Naive thymus-derived CD4-positive, alpha-beta T cell (primary cell): ENCODE measurements at regions of chr1 and their contacts with region 1.

Region 1: DNA sequence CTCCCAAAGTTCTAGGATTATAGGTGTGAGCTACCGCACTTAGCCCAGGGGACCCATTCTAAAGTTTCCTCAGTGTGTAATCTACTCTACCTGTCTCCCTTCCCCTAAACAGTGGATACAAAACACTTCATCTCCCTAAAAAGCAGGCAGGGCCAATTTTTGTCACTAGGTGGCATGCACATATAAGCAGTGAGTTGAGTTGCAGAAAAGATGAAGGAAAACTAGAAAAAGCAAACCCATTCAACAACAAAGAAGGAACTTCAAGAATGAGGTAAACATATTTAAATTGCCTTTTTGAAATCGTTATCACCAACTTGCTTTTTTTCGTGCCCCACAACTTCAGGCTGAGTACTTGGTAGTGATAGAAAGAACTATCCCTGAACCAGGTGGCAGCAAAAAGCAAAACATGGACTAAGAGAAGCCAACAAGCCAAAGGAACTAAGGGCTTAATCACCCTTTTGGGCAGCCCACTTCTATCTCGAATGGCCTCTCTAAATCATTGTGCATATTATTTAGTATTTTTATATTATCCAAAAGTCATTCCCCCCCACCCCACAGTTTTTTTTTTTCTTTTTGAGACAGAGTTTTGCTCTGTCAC is 19.7 kb upstream of the ALDH9A1 start:
- DNase-seq: peak in 7 of 9 donors; percentile 6 to 41 (median 22)
- ATAC-seq: peak; percentile 45
- H3K4me3 ChIP-seq: no peak overlapping the region
- H3K4me3 Mint-ChIP-seq: no peak overlapping the region
- H3K27ac ChIP-seq: no peak overlapping the region
- H3K27ac Mint-ChIP-seq: no peak overlapping the region
- H3K4me1 ChIP-seq: no peaks in the 10 kb centered on the region
- H3K4me1 Mint-ChIP-seq: peaks cover 0 to 3% (median 0%) of the 10 kb centered on the region in 7 donors
- H3K27me3 ChIP-seq: no peaks in the 10 kb centered on the region
- H3K27me3 Mint-ChIP-seq: peaks cover 0 to 16% (median 0%) of the 10 kb centered on the region in 5 donors

Region 2: GRCh38 chr1:165686121-165686970 is 31.7 kb before region 1 on chr1:
- CTCF ChIA-PET with region 1: no interaction called
- POLR2A ChIA-PET with region 1: no interaction called
- intact Hi-C with region 1: loop called in 1 of 2 experiments (anchors 1 kb)
- DNase-seq: no peak
- ATAC-seq: peak; percentile 36
- H3K4me3 ChIP-seq: no peak overlapping the region
- H3K4me3 Mint-ChIP-seq: peak overlapping the region in 8 of 10 donors; percentile 3 to 59 (median 34)
- H3K27ac ChIP-seq: no peak overlapping the region
- H3K27ac Mint-ChIP-seq: peak overlapping the region; percentile 20 to 85 (median 64)
- H3K4me1 ChIP-seq: peaks cover 0 to 10% of the 10 kb centered on the region in 2 donors
- H3K4me1 Mint-ChIP-seq: peaks cover 28 to 69% (median 53%) of the 10 kb centered on the region in 7 donors
- H3K27me3 ChIP-seq: no peaks in the 10 kb centered on the region
- H3K27me3 Mint-ChIP-seq: no peaks in the 10 kb centered on the region